Activated CD4-positive, alpha-beta T cell treated with anti-CD3 and anti-CD28 coated beads for 36 hours (primary cell): ENCODE measurements at regions of chr17 and their contacts with region 1.

Region 1: GRCh38 chr17:38982858-38983746 is 15.9 kb upstream of the FBXO47 start:
- DNase-seq: peak; percentile 57
- ATAC-seq: peak; percentile 72
- H3K4me3 Mint-ChIP-seq: no peak overlapping the region
- H3K27ac Mint-ChIP-seq: no peak overlapping the region
- H3K4me1 Mint-ChIP-seq: peaks cover 6% of the 10 kb centered on the region
- H3K27me3 Mint-ChIP-seq: no peaks in the 10 kb centered on the region

Region 2: DNA sequence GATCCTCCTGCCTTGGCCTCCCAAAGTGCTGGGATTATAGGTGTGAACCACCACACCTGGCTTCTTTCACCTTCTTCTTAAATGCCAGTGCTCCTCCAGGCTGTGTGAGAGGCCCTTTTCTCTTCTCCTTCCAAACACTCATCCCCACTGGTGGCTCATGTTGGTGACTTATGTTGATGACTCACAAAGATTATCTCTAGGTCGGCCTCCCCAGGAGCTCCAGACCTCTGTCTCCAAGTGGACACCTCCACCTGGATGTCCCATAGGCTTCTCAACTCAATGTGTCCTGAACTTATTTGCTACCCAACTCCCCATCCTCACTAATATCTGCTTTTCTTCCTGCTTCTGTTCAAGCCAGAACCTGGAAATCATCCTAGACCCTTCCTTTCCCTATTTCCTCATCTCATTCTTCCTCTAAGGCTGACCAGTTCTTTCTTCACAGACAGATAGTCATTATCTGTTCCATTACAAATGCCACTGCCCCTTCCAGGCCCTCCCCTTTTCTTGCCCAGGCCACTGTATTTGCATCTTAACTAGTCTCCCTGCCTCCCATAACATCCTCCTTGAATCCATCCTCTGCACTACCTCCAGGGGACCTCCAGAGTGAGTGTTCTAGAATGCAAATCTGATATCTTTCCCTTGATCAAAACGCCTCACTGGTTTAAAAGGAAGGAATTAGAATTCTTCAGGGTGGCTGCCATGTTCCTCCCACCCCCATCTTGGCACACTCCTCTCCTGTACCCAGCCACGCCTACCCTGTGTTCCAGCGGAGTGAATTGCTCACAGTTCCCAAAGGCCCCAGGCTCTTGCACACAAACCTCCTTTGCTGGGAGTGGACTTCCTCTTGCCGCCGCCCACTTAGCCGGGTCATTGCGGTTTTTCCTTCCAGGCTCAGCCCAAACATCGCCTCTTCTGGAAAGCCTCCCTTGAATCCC is 18.9 kb after region 1 on chr17:
- CTCF ChIA-PET with region 1: interaction called, 11 read pairs
- POLR2A ChIA-PET with region 1: no interaction called
- intact Hi-C with region 1: no loop called
- DNase-seq: peak; percentile 32
- ATAC-seq: no peak
- H3K4me3 Mint-ChIP-seq: no peak overlapping the region
- H3K27ac Mint-ChIP-seq: peak overlapping the region; percentile 7
- H3K4me1 Mint-ChIP-seq: peaks cover 27% of the 10 kb centered on the region
- H3K27me3 Mint-ChIP-seq: no peaks in the 10 kb centered on the region

Region 3: DNA sequence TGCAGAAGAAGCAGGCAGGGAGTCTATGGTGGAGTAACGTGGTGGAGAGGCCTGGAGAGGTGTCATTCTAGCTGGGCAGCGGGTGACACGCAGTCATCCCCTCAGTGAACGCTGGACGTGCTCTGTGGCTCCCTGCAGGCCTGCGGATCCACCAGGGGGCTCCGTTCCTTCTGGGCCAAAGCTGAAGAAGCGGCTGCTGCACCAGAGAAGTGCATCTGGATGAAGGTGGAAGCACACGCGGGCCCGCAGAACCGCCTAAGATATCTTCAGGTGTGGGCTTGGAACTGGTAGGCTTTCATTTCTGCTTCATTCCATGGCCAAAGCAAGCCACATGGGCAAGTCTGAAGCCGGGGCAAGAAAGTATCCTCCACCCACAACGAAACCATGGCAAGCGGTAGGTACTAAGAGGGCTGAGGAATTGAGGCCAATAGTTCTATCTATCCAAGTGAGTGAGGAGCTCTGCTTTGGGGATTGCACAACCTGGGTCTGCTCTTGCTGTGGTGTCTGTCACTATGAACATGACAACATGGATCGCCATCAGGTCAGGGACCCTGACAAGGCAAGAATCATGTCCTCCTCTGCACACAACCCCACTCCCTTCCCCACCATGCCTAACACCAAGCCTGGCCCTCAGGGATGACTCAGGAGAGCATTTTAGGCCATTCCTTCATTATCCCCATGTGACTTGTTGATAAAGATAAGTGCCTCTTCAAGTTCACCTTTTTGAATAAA is 63.0 kb after region 1 on chr17:
- CTCF ChIA-PET with region 1: interaction called, 3 read pairs
- POLR2A ChIA-PET with region 1: no interaction called
- intact Hi-C with region 1: loop called in 1 of 2 experiments (anchors 5 kb)
- DNase-seq: no peak
- ATAC-seq: no peak
- H3K4me3 Mint-ChIP-seq: no peak overlapping the region
- H3K27ac Mint-ChIP-seq: peak overlapping the region; percentile 38
- H3K4me1 Mint-ChIP-seq: no peaks in the 10 kb centered on the region
- H3K27me3 Mint-ChIP-seq: peaks cover 1% of the 10 kb centered on the region

Region 4: GRCh38 chr17:39092692-39093230 is 109.7 kb after region 1 on chr17:
- CTCF ChIA-PET with region 1: interaction called, 36 read pairs
- POLR2A ChIA-PET with region 1: no interaction called
- intact Hi-C with region 1: no loop called
- DNase-seq: peak; percentile 24
- ATAC-seq: peak; percentile 33
- H3K4me3 Mint-ChIP-seq: peak overlapping the region; percentile 63
- H3K27ac Mint-ChIP-seq: peak overlapping the region; percentile 87
- H3K4me1 Mint-ChIP-seq: peaks cover 72% of the 10 kb centered on the region
- H3K27me3 Mint-ChIP-seq: no peaks in the 10 kb centered on the region

Region 5: GRCh38 chr17:39174907-39175694 is 192.0 kb after region 1 on chr17:
- CTCF ChIA-PET with region 1: interaction called, 49 read pairs
- POLR2A ChIA-PET with region 1: no interaction called
- intact Hi-C with region 1: loop called in 1 of 2 experiments (anchors 1 kb)
- DNase-seq: peak; percentile 87
- ATAC-seq: peak; percentile 88
- H3K4me3 Mint-ChIP-seq: no peak overlapping the region
- H3K27ac Mint-ChIP-seq: no peak overlapping the region
- H3K4me1 Mint-ChIP-seq: peaks cover 9% of the 10 kb centered on the region
- H3K27me3 Mint-ChIP-seq: no peaks in the 10 kb centered on the region

Region 6: GRCh38 chr17:39244600-39245570 is 261.8 kb after region 1 on chr17:
- CTCF ChIA-PET with region 1: interaction called, 24 read pairs
- POLR2A ChIA-PET with region 1: no interaction called
- intact Hi-C with region 1: loop called in 1 of 2 experiments (anchors 5 kb)
- DNase-seq: peak; percentile 93
- ATAC-seq: peak; percentile 96
- H3K4me3 Mint-ChIP-seq: no peak overlapping the region
- H3K27ac Mint-ChIP-seq: no peak overlapping the region
- H3K4me1 Mint-ChIP-seq: peaks cover 3% of the 10 kb centered on the region
- H3K27me3 Mint-ChIP-seq: no peaks in the 10 kb centered on the region